Lower leg skin (tissue), 4 donors: ENCODE measurements at regions of chr6 and their contacts with region 1.

Region 1: DNA sequence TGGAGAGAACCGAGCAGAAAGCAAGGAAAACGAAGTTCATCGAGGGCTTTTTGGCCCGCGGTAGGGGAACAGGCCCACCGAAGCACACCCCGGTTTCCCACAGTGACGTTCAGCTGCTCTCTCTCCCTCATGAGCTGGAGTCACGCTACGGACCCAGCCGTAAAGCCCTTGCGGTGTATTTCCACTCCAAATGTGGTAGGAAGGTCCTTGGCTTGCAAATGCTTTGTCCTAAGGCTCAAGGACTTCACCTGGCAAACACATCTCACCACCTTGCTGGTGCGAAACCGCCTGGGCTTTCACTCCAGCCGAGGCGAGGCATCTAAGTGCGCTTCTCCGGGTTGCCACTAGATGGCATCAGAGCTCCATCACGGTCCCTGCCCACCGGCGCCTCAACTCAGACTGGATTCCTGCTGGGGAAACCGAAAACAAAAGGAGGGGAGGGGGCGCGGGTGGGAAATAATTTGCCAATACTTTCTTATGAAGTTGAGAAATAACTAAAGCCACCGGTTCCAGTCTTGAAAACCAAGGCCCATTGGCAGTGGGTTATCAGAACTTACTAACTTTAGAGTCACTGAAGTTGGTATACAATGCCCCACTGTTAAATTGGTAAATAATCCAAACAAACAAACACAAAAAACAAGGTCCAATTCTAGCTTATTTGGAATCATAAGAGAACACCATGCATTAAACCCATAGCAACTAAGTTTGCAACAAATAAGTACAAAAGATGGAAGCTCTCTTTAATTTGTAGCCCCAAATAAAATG is 13.4 kb upstream of the FOXC1 start:
- DNase-seq: no peak
- H3K4me3 ChIP-seq: no peak overlapping the region
- CTCF ChIP-seq: peak in 1 of 3 donors; percentile 67
- POLR2A ChIP-seq: no peak

Region 2: GRCh38 chr6:1645470-1646185 is 49.4 kb after region 1 on chr6:
- intact Hi-C with region 1: no loop called
- DNase-seq: peak in 1 of 2 donors; percentile 67
- H3K4me3 ChIP-seq: no peak overlapping the region
- CTCF ChIP-seq: no peak
- POLR2A ChIP-seq: no peak

Region 3: DNA sequence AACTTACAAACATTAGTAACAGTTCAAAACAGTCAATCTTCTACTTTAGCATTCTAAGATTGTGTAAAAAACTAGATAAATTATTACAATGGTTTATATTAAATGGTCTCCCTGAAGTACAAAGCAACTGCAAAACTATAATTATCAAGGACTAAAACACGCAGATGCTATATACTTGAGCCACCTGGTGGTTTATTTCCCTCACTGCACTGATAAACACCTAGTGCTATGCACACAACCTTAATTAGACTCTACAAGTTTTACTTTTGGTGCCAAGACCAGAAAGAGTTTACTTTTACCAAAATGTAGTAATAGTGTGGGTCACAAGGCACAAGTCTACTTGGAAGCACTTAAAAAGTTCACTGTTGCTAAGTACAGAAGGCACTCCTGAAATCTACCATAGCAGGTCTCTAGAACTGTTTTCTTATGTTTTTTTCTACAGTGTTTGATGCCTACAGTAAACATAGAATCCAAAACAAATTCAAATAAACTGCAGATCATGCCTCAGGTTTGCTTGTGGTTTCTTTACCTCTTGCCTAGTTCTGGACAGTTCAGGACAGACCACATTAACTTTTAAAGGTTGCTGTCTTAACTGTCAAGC is 599.9 kb after region 1 on chr6:
- intact Hi-C with region 1: loop called (anchors 2 kb)
- DNase-seq: peak in 1 of 2 donors; percentile 28
- H3K4me3 ChIP-seq: no peak overlapping the region
- CTCF ChIP-seq: no peak
- POLR2A ChIP-seq: no peak